ENCODE measurements at regions of chr14 and their contacts with region 1.

Region 1: GRCh38 chr14:24108336-24108874 is 6.2 kb upstream of the DCAF11 start:
- DNase-seq: no peak
- ATAC-seq: no peak
- H3K4me3 Mint-ChIP-seq: no peak overlapping the region
- H3K27ac Mint-ChIP-seq: peak overlapping the region; percentile 97
- H3K4me1 Mint-ChIP-seq: peaks cover 42% of the 10 kb centered on the region
- H3K27me3 Mint-ChIP-seq: no peaks in the 10 kb centered on the region

Region 2: GRCh38 chr14:24051789-24052655 is 56.4 kb before region 1 on chr14 and contains the start of gene CARMIL3:
- CTCF ChIA-PET with region 1: interaction called, 210 read pairs
- POLR2A ChIA-PET with region 1: interaction called, 20 read pairs
- DNase-seq: peak; percentile 73
- ATAC-seq: peak; percentile 85
- H3K4me3 Mint-ChIP-seq: peak within 1 kb of the TSS; percentile 70
- H3K27ac Mint-ChIP-seq: peak within 1 kb of the TSS; percentile 70
- H3K4me1 Mint-ChIP-seq: peaks cover 26% of the 10 kb centered on the region
- H3K27me3 Mint-ChIP-seq: peaks cover 36% of the 10 kb centered on the region
- total RNA-seq, gene CARMIL3: 0.86 to 0.95 TPM

Region 3: DNA sequence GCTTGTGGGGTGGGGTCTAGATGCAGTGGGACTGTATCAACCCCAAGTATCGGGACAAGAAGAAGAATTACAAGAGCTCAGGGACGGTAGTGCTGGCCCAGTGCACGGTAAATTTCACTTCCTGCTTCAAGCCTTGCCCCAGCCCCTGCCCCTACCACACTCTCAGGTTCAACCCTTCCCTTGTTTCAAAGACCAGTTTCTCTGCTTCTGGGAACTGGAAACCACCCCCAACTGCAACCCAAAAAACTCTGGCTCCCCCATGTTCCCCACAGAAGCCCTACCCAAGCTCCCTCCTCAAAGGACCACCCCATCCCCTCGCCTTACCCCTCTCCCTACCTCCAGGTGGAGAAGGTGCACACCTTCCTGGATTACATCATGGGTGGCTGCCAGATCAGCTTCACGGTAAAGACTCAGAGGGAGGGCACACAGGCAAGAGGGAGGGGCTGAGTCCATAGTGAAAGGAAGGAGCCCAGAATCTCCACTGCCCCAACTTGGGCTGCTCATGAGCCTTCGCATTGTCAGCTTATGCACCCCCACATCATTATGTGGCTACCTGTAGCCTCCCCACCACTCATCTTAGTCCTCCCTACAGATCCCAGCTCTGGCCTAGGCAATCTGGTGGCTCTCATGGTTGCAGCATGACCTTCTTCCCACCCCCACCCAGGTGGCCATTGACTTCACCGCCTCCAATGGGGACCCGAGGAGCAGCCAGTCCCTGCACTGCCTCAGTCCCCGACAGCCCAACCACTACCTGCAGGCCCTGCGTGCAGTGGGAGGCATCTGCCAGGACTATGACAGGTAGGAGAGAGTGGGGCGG is 32.7 kb before region 1 on chr14:
- CTCF ChIA-PET with region 1: interaction called, 43 read pairs
- POLR2A ChIA-PET with region 1: interaction called, 12 read pairs
- DNase-seq: peak; percentile 44
- ATAC-seq: peak; percentile 51
- H3K4me3 Mint-ChIP-seq: peak overlapping the region; percentile 41
- H3K27ac Mint-ChIP-seq: peak overlapping the region; percentile 82
- H3K4me1 Mint-ChIP-seq: peaks cover 33% of the 10 kb centered on the region
- H3K27me3 Mint-ChIP-seq: peaks cover 2% of the 10 kb centered on the region

Region 4: GRCh38 chr14:24080888-24081738 is 27.3 kb before region 1 on chr14:
- CTCF ChIA-PET with region 1: interaction called, 43 read pairs
- POLR2A ChIA-PET with region 1: interaction called, 12 read pairs
- DNase-seq: peak; percentile 89
- ATAC-seq: peak; percentile 94
- H3K4me3 Mint-ChIP-seq: peak overlapping the region; percentile 76
- H3K27ac Mint-ChIP-seq: peak overlapping the region; percentile 86
- H3K4me1 Mint-ChIP-seq: peaks cover 33% of the 10 kb centered on the region
- H3K27me3 Mint-ChIP-seq: no peaks in the 10 kb centered on the region

Region 5: DNA sequence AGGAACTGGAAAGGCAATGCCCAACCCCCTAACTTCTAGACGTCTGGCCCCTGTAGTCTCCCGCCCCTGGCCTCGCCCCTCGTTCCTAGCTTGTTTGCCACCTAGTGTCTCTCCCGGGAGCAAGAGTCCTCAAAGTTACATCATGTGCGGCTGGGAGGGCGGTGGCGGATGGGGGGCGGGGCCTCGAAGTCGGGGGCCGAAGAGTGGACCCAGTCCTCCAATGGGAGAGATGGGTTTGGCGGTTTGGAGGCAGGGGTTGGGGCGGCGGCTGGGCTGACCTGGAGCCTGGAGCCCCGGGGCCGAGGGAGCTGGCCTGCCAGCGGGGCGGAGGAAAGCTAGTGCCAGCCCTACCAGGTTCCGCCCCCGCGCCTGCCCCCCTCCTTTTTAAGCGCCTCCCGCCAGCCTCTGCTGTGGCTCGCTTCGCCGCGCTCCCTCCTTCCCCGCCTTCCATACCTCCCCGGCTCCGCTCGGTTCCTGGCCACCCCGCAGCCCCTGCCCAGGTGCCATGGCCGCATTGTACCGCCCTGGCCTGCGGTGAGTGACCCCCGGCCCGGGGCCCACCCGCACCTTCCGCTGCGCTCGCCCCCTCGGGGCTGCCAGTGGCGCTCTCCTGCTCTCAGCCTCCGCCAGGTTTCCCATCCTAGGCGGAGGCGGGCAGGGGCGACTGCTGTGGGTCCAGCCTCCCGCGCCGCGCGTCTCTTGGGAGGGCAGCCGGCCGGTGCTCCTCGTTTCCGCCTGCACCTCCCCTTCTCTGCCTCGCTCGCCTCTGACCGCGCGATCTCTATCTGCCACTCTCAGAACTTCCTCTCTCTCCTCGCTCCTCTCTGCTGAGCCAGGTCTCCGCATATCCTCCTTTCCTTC is 14.3 kb before region 1 on chr14 and contains the start of gene PCK2:
- CTCF ChIA-PET with region 1: interaction called, 315 read pairs
- POLR2A ChIA-PET with region 1: interaction called, 89 read pairs
- DNase-seq: peak; percentile 84
- ATAC-seq: peak; percentile 80
- H3K4me3 Mint-ChIP-seq: peak within 1 kb of the TSS; percentile 100
- H3K27ac Mint-ChIP-seq: peak within 1 kb of the TSS; percentile 99
- H3K4me1 Mint-ChIP-seq: peaks cover 42% of the 10 kb centered on the region
- H3K27me3 Mint-ChIP-seq: no peaks in the 10 kb centered on the region
- total RNA-seq, gene PCK2: 49.6 to 54.9 TPM

Region 6: DNA sequence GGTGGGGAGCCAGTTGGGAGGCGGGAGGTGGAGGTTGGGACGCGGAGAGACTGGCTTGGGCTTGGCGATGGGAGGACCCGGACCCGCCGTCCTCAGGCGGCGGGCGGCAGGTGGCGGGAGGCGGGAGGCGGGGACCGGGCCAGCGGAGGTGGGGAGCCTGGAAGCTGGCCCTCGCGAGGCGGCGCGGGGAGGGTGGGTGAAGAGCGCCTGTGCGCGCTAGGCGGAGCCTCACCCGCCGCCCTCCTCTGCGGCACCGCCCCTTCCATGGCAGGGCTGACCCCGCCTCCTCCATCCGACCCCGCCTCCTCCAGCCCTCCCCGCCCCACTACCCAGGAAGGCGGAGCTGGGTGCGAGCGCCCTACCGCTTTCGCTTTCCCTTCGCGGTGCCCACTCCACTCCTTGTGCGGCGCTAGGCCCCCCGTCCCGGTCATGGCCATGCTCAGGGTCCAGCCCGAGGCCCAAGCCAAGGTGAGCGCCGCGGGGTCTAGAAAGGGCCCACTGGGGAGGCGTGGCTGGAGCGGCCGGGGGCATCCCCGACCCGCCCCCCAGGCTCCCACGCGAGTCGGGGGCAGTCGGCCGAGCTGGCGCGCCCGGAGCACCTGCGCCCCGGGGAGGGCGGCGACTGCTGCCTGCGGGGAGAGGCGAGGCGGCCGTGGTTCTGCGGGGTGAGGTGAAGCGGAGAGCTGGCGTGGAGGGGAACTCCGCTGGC is 27.6 kb after region 1 on chr14 and contains the start of gene PSME1:
- CTCF ChIA-PET with region 1: interaction called, 43 read pairs
- POLR2A ChIA-PET with region 1: interaction called, 119 read pairs
- DNase-seq: peak; percentile 95
- ATAC-seq: peak; percentile 91
- H3K4me3 Mint-ChIP-seq: peak within 1 kb of the TSS; percentile 86
- H3K27ac Mint-ChIP-seq: peak within 1 kb of the TSS; percentile 91
- H3K4me1 Mint-ChIP-seq: peaks cover 55% of the 10 kb centered on the region
- H3K27me3 Mint-ChIP-seq: no peaks in the 10 kb centered on the region
- total RNA-seq, gene PSME1: 516 to 530 TPM

Region 7: DNA sequence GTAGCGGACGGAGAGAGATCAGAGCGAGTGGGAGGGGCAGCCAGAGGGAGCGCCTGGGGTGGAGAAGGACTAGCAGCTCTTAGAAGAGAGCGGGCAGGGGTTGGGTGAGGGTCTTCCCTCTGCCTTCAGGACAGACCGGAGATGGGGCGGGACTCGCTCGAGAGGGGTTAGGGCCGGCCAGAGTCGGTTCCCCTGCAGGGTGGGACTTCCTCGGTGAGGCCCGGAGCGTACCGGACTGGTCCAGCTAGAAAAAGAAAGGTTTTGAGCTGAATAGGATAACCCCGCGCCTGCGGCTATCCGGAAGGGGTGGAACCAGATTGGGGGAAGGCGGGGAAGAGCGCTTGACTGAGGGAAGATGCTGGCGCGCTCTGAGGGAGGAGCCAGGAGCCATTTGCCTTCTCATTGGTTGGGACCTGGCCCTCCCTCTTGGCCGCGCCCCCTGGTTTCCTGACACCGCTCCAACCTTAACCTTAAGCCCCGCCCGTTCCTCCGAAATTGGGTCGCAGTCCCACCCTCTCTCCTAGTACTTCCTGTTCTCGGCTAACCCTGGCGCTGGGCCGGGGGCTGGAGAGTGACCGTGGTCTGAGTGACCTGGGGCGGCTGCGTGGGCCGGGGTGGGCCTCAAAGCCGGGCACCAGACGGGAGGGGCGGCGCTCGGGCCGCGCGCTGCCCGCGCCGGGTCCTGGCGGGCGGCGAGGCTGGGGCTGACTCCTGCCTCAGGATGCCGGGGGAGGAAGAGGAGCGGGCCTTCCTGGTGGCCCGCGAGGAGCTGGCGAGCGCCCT is 38.8 kb after region 1 on chr14 and contains the start of gene RNF31:
- CTCF ChIA-PET with region 1: interaction called, 26 read pairs
- POLR2A ChIA-PET with region 1: interaction called, 56 read pairs
- DNase-seq: peak; percentile 100
- ATAC-seq: peak; percentile 87
- H3K4me3 Mint-ChIP-seq: peak within 1 kb of the TSS; percentile 88
- H3K27ac Mint-ChIP-seq: peak within 1 kb of the TSS; percentile 95
- H3K4me1 Mint-ChIP-seq: peaks cover 67% of the 10 kb centered on the region
- H3K27me3 Mint-ChIP-seq: no peaks in the 10 kb centered on the region
- total RNA-seq, gene RNF31: 123 to 142 TPM

Region 8: GRCh38 chr14:24171422-24172260 is 63.2 kb after region 1 on chr14 and contains the start of gene REC8:
- CTCF ChIA-PET with region 1: no interaction called
- POLR2A ChIA-PET with region 1: no interaction called
- DNase-seq: peak; percentile 85
- ATAC-seq: peak; percentile 77
- H3K4me3 Mint-ChIP-seq: peak within 1 kb of the TSS; percentile 77
- H3K27ac Mint-ChIP-seq: peak within 1 kb of the TSS; percentile 81
- H3K4me1 Mint-ChIP-seq: peaks cover 50% of the 10 kb centered on the region
- H3K27me3 Mint-ChIP-seq: no peaks in the 10 kb centered on the region
- total RNA-seq, gene REC8: 54.5 to 58.6 TPM

Region 9: DNA sequence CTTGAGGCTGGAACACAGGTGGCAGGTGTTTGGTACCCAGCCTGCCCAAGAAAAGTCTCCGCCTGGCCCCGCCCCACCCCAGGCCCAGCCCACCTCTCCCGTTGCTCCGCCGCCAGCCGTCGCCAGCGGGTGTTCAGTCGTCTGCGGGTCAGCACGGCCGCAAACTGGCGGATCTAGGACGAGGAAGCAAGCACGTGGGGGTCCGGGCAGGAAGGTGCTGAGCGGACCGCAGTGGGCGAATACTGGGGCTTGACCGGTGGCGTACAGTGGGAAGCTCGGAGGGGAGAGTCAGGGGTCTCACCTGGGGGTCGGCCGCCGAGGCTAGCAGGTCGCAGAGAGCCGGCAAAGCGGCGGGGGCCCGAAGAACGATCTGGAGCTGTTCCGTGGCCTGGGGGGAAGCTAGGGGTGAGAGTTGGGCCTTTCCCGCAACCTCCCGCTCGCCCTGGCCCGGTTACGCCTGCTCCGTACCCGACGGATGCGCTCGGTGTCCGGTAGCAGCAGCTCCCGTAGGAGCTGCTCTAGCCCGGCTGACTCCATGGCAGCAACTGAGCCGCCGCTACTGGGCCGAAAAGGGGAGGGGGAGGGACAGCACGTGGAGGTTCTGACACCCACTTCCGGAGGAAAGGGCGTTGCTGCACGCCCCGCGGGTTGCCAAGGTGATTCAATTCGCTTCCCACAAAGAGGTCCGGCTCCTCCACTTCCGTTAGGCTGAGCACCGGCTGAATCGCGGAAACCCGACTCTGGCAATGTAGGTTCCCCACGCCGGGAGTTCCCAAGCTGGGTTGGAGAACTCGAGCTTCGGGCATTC is 80.0 kb after region 1 on chr14 and contains the start of gene IPO4:
- CTCF ChIA-PET with region 1: no interaction called
- POLR2A ChIA-PET with region 1: no interaction called
- DNase-seq: peak; percentile 97
- ATAC-seq: peak; percentile 84
- H3K4me3 Mint-ChIP-seq: peak within 1 kb of the TSS; percentile 92
- H3K27ac Mint-ChIP-seq: peak within 1 kb of the TSS; percentile 87
- H3K4me1 Mint-ChIP-seq: peaks cover 49% of the 10 kb centered on the region
- H3K27me3 Mint-ChIP-seq: no peaks in the 10 kb centered on the region
- total RNA-seq, gene IPO4: 56.3 to 60.1 TPM

Measured in activated CD8-positive, alpha-beta T cell treated with anti-CD3 and anti-CD28 coated beads, Interleukin-2, amount 10 ng/mL, durations not matched to agents 7 days and 5 days (primary cell).